Endothelial cell of umbilical vein (primary cell): ENCODE measurements at regions of chr5 and their contacts with region 1.

Region 1: GRCh38 chr5:93582677-93583438 is at the start of gene NR2F1:
- DNase-seq: peak; percentile 99
- H3K4me3 ChIP-seq: peak within 1 kb of the TSS; percentile 76 to 93 (median 85)
- H3K27ac ChIP-seq: peak within 1 kb of the TSS; percentile 86
- H3K4me1 ChIP-seq: peaks cover 25% of the 10 kb centered on the region
- H3K27me3 ChIP-seq: no peaks in the 10 kb centered on the region
- CTCF ChIP-seq: no peak
- POLR2A ChIP-seq: peak; percentile 89
- total RNA-seq, gene NR2F1: 21.5 and 23.9 TPM in 2 replicates

Region 2: GRCh38 chr5:92518318-92518904 is 1064.4 kb before region 1 on chr5:
- CTCF ChIA-PET with region 1: interaction called, 6 read pairs
- POLR2A ChIA-PET with region 1: no interaction called
- dilution Hi-C with region 1: no loop called
- intact Hi-C with region 1: loop called (anchors 5 kb)
- DNase-seq: peak; percentile 50
- H3K4me3 ChIP-seq: no peak overlapping the region
- H3K27ac ChIP-seq: no peak overlapping the region
- H3K4me1 ChIP-seq: no peaks in the 10 kb centered on the region
- H3K27me3 ChIP-seq: no peaks in the 10 kb centered on the region
- CTCF ChIP-seq: peak; percentile 47 to 69
- POLR2A ChIP-seq: no peak

Region 3: DNA sequence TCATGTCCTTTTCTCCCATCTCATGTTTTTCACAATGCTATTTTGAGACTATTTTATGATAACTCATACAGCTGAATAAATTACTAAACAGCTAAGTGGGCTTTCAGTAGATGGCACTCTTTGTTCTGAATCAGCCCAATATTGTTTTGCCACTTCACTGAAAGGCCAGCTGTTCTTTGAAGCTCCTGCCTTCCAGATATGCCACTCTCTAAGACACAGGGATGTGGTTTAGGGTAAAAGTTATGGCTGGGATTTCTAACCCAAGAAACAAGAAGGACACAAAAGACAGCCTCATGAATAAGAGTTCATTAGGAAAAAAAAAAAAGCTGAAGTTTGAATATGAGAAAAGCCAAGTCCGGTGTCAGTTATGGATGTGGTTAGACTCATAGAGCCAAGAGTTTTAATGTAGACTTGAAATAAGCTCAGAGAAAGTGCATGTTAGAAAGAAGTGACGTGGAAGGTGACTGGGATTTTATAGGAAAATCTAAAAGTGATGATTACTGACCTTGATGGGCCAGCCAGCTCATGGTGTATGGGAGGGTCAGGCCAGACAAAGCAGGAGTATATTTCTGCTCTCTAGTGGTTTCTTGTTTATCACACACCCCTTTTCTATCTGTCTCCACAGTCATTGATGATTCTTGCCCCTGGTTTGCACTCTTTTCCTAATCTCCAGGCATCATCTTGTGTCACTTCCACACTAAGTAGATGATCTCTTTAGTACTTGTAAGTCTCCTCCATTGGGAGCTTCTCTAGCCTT is 490.3 kb before region 1 on chr5:
- CTCF ChIA-PET with region 1: interaction called, 28 read pairs
- POLR2A ChIA-PET with region 1: interaction called, 3 read pairs
- dilution Hi-C with region 1: no loop called
- intact Hi-C with region 1: loop called (anchors 1 kb)
- DNase-seq: peak; percentile 82
- H3K4me3 ChIP-seq: no peak overlapping the region
- H3K27ac ChIP-seq: no peak overlapping the region
- H3K4me1 ChIP-seq: no peaks in the 10 kb centered on the region
- H3K27me3 ChIP-seq: no peaks in the 10 kb centered on the region
- CTCF ChIP-seq: peak; percentile 13 to 33
- POLR2A ChIP-seq: no peak

Region 4: DNA sequence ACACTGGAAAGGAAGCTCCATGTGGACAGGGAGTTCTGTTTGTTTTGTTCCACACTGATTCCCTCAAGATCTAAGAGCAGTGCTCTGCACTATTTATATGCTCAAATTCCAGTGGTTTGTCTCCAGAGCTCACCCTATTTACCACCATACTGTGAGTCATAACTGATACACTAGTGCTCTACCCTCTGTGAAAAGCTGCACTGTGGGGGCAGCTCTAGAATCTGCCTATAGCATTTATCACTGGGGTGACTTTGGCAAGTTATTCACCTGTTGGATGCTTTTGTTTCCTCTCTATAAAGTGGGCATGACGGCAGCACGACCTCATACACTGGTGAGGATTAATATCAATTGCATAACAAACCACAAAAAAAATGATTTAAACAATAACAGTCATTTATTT is 309.7 kb before region 1 on chr5:
- CTCF ChIA-PET with region 1: no interaction called
- POLR2A ChIA-PET with region 1: interaction called, 7 read pairs
- dilution Hi-C with region 1: no loop called
- intact Hi-C with region 1: loop called (anchors 1 kb)
- DNase-seq: peak; percentile 55
- H3K4me3 ChIP-seq: no peak overlapping the region
- H3K27ac ChIP-seq: peak overlapping the region; percentile 99
- H3K4me1 ChIP-seq: peaks cover 30% of the 10 kb centered on the region
- H3K27me3 ChIP-seq: no peaks in the 10 kb centered on the region
- CTCF ChIP-seq: no peak
- POLR2A ChIP-seq: no peak

Region 5: DNA sequence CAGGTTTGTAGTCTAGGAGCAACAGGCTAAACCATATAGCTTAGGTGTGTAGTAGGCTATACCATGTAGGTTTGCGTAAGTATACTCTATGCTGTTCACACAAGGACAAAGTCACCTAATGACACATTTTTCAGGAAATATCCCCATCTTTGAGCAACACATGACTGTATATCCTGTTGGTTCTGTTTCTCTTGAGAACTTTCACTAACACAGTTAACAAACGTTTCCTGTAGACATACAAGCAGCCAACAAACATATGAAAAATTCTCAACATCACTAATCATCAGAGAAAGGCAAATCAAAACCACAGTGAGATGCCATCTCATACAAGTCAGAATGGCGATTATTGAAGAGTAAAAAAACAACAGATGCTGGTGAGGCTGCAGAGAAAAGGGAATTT is 70.1 kb before region 1 on chr5:
- CTCF ChIA-PET with region 1: interaction called, 3 read pairs
- POLR2A ChIA-PET with region 1: no interaction called
- dilution Hi-C with region 1: no loop called
- intact Hi-C with region 1: loop called (anchors 1 kb)
- DNase-seq: peak; percentile 95
- H3K4me3 ChIP-seq: no peak overlapping the region
- H3K27ac ChIP-seq: peak overlapping the region; percentile 86
- H3K4me1 ChIP-seq: peaks cover 25% of the 10 kb centered on the region
- H3K27me3 ChIP-seq: no peaks in the 10 kb centered on the region
- CTCF ChIP-seq: no peak
- POLR2A ChIP-seq: no peak

Region 6: DNA sequence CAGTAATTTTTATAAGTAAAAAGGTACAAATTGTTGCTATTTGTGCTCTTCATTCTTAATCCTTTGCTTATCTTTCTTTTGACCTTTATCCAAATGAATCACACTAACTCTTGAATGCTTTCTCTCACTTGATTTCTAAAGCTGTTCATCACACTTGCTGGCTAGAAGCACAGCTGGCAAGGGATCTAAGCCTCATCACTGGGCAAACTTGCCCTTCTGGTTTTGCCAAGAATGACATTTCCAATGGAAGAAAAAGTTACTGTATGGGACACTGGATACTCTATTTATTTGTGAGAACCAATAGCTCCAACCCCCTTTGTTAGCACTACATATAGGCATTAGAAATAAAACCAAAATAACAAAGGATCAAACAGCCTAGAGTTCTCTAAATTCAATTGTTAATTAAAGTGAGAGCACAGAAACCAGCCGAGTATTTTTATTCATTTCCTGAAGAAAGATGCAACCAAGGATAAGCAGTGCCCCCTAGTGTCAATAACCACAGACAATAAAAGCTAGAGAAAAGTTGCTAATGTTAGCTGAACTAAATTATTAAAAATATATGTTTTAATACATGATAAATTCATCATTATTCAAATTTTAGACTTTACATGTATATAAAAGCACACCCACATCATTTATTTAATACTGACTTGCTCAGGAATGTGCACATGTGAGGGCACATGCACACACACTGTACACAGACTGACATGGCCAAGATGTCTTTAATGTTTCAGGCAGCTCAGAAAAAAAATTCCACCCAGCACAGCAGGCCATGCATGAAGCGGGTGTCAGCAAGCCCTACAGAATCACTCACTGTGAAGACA is 218.3 kb after region 1 on chr5:
- CTCF ChIA-PET with region 1: interaction called, 79 read pairs
- POLR2A ChIA-PET with region 1: interaction called, 3 read pairs
- dilution Hi-C with region 1: no loop called
- intact Hi-C with region 1: loop called (anchors 1 kb)
- DNase-seq: peak; percentile 68
- H3K4me3 ChIP-seq: no peak overlapping the region
- H3K27ac ChIP-seq: no peak overlapping the region
- H3K4me1 ChIP-seq: peaks cover 2% of the 10 kb centered on the region
- H3K27me3 ChIP-seq: no peaks in the 10 kb centered on the region
- CTCF ChIP-seq: peak; percentile 41
- POLR2A ChIP-seq: no peak